Heart right ventricle (tissue), 16 donors: ENCODE measurements at regions of chr1 and their contacts with region 1.

Region 1: GRCh38 chr1:204506961-204507387 is 9.2 kb upstream of the MDM4 start:
- DNase-seq: peak; percentile 36 to 88
- ATAC-seq: peak; percentile 74 to 92 (median 90)
- H3K4me3 ChIP-seq: peak overlapping the region; percentile 30 to 68 (median 59)
- H3K27ac ChIP-seq: peak overlapping the region; percentile 68 to 90 (median 86)
- H3K4me1 ChIP-seq: peaks cover 0 to 34% (median 25%) of the 10 kb centered on the region in 9 donors
- H3K27me3 ChIP-seq: no peaks in the 10 kb centered on the region
- CTCF ChIP-seq: no peak

Region 2: GRCh38 chr1:204431310-204432165 is 75.4 kb before region 1 on chr1:
- intact Hi-C with region 1: loop called in 7 of 10 experiments (anchors 1 to 5 kb)
- DNase-seq: peak; percentile 80
- ATAC-seq: peak; percentile 57 to 85 (median 76)
- H3K4me3 ChIP-seq: no peak overlapping the region
- H3K27ac ChIP-seq: peak overlapping the region in 3 of 10 donors; percentile 11 to 42 (median 12)
- H3K4me1 ChIP-seq: peaks cover 0 to 37% (median 10%) of the 10 kb centered on the region in 9 donors
- H3K27me3 ChIP-seq: no peaks in the 10 kb centered on the region
- CTCF ChIP-seq: peak; percentile 79 to 98 (median 94)

Region 3: GRCh38 chr1:204446370-204447111 is 60.4 kb before region 1 on chr1:
- intact Hi-C with region 1: loop called in 6 of 10 experiments (anchors 1 to 2 kb)
- DNase-seq: peak; percentile 76 to 79
- ATAC-seq: peak; percentile 71 to 79 (median 74)
- H3K4me3 ChIP-seq: no peak overlapping the region
- H3K27ac ChIP-seq: peak overlapping the region in 7 of 10 donors; percentile 4 to 65 (median 58)
- H3K4me1 ChIP-seq: peaks cover 33 to 90% (median 54%) of the 10 kb centered on the region in 9 donors
- H3K27me3 ChIP-seq: no peaks in the 10 kb centered on the region
- CTCF ChIP-seq: peak; percentile 61 to 85 (median 78)

Region 4: DNA sequence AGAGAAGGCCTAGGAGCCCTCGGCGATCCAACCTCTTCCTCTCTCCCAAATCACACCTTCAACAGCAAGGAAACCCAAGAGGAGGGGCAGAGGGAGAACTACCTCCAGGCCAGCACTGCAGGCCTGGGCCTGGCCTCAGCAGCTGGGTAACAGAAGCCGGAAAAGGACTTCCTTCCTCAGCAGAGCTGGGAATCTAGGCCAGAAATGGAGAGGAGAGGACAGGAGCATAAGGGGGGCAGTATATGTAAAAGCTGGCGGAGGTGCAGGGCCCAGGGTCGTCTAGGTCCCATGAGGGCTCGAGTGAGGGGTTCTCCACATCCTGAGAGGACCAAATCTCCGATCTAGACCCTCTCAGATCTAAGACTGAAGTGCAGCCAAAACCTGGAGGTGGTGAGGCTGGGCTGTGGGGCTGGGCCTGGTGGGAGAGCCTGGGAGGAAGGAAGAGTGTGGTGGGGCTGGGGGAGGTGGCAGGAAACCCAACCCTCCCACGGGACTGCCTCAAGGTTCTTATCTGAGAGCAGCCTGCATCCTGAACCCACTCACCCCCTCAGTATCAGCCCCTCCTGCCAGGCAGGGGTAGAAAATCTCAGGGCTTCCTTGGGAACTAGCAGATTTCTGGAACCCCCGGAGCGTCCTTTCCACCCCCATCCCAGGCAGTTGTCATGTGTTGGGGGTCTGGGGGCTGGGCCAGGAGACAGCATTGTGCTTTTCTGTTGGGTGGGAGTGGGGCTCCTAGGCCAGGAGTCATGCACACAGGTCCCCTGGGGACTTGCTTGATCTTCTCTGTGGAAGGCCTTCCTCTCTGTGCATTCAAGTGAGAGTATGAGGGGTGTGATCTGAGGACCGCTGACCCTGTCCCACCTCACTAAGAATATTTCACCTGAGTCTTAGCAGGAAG is 45.4 kb before region 1 on chr1:
- intact Hi-C with region 1: no loop called
- DNase-seq: peak; percentile 59 to 80
- ATAC-seq: peak; percentile 39 to 79 (median 66)
- H3K4me3 ChIP-seq: peak overlapping the region in 1 of 10 donors; percentile 19
- H3K27ac ChIP-seq: peak overlapping the region; percentile 63 to 98 (median 88)
- H3K4me1 ChIP-seq: peaks cover 45 to 97% (median 74%) of the 10 kb centered on the region in 9 donors
- H3K27me3 ChIP-seq: no peaks in the 10 kb centered on the region
- CTCF ChIP-seq: no peak

Region 5: DNA sequence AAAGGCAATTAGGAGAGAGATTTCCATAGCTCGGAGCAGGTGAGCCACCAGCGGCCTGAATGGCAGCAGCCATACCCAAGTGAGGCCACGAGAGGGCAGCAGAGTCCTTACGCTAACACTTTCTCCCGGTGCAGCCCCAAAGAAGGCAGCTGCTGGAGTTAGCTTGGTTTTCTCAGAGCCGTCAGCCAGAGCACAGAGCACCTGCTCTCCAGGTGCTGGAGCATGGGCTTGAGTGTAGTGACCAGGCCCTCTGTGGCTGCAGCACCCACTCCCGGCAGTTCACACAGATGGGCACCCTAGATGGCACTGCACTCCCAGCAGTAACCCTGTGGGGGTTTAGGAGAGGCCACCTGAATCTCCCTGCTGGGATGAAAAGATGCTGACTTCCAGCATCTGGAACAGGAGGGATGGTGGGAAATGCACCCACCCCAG is 766.6 kb after region 1 on chr1:
- intact Hi-C with region 1: no loop called
- DNase-seq: peak; percentile 81 to 82
- ATAC-seq: peak; percentile 43 to 89 (median 80)
- H3K4me3 ChIP-seq: no peak overlapping the region
- H3K27ac ChIP-seq: no peak overlapping the region
- H3K4me1 ChIP-seq: peaks cover 0 to 38% (median 18%) of the 10 kb centered on the region in 9 donors
- H3K27me3 ChIP-seq: no peaks in the 10 kb centered on the region
- CTCF ChIP-seq: peak; percentile 97 to 100 (median 99)